ENCODE measurements at regions of chr3 and their contacts with region 1.

Region 1: DNA sequence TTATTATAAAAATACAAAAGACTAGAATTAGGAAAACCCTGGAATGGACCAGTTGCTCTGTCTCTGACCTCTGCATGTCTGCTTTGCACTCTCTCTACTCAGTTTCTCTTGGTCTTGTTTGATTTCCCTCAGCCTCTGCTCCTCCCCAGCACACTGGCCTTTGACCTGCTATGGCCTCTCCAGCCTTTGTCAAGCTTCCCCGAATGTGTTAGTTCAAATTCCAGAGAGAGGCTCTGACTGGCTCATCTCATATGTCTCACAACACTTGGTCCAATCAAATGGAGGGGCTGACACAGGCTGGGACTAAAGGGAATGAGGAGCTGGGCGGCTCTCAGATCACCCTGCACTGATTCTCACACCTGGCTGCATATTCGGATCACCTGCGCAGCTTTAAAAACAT is 52.4 kb upstream of the CMTM8 start:
- DNase-seq: peak; percentile 82 to 84
- H3K4me3 ChIP-seq: 0 out of 2 replicates have a peak overlapping the region, but pooled peaks have one; percentile 11
- H3K4me3 Mint-ChIP-seq: peak overlapping the region; percentile 19
- H3K27ac Mint-ChIP-seq: peak overlapping the region; percentile 76
- H3K4me1 ChIP-seq: peaks cover 15% of the 10 kb centered on the region
- H3K4me1 Mint-ChIP-seq: peaks cover 13% of the 10 kb centered on the region
- H3K27me3 ChIP-seq: no peaks in the 10 kb centered on the region
- H3K27me3 Mint-ChIP-seq: no peaks in the 10 kb centered on the region
- CTCF ChIP-seq: no peak

Region 2: GRCh38 chr3:31777092-31777491 is 409.0 kb before region 1 on chr3:
- CTCF ChIA-PET with region 1: no interaction called
- POLR2A ChIA-PET with region 1: no interaction called
- intact Hi-C with region 1: no loop called
- DNase-seq: no peak
- H3K4me3 ChIP-seq: no peak overlapping the region
- H3K4me3 Mint-ChIP-seq: no peak overlapping the region
- H3K27ac Mint-ChIP-seq: no peak overlapping the region
- H3K4me1 ChIP-seq: peaks cover 12% of the 10 kb centered on the region; the same call in 1 of the 2 replicates
- H3K4me1 Mint-ChIP-seq: peaks cover 7% of the 10 kb centered on the region
- H3K27me3 ChIP-seq: no peaks in the 10 kb centered on the region
- H3K27me3 Mint-ChIP-seq: no peaks in the 10 kb centered on the region
- CTCF ChIP-seq: no peak

Region 3: GRCh38 chr3:32216172-32216783 is 30.2 kb after region 1 on chr3:
- CTCF ChIA-PET with region 1: interaction called, 3 read pairs
- POLR2A ChIA-PET with region 1: no interaction called
- intact Hi-C with region 1: loop called (anchors 2 kb)
- DNase-seq: peak; percentile 90
- H3K4me3 ChIP-seq: no peak overlapping the region
- H3K4me3 Mint-ChIP-seq: peak overlapping the region; percentile 71
- H3K27ac Mint-ChIP-seq: peak overlapping the region; percentile 91
- H3K4me1 ChIP-seq: peaks cover 28% of the 10 kb centered on the region
- H3K4me1 Mint-ChIP-seq: peaks cover 7% of the 10 kb centered on the region
- H3K27me3 ChIP-seq: no peaks in the 10 kb centered on the region
- H3K27me3 Mint-ChIP-seq: no peaks in the 10 kb centered on the region
- CTCF ChIP-seq: no peak

Measured in Caco-2 (cell line).